A549 (cell line): ENCODE measurements at regions of chr7 and their contacts with region 1.

Region 1: GRCh38 chr7:73623798-73624668 is at the start of gene MLXIPL:
- DNase-seq: peak; percentile 78 to 97
- ATAC-seq: peak; percentile 84 to 90
- H3K4me3 ChIP-seq: peak within 1 kb of the TSS; percentile 55
- H3K27ac ChIP-seq: peak within 1 kb of the TSS; percentile 71 to 92
- H3K4me1 ChIP-seq: peaks cover 25% of the 10 kb centered on the region
- CTCF ChIP-seq: no peak
- EP300 ChIP-seq: no peak
- POLR2A ChIP-seq: peak; percentile 48; the same call in 1 of the 2 replicates
- RAD21 ChIP-seq: no peak
- polyA plus RNA-seq, gene MLXIPL: 1.4 and 2.2 TPM in 2 replicates

Region 2: DNA sequence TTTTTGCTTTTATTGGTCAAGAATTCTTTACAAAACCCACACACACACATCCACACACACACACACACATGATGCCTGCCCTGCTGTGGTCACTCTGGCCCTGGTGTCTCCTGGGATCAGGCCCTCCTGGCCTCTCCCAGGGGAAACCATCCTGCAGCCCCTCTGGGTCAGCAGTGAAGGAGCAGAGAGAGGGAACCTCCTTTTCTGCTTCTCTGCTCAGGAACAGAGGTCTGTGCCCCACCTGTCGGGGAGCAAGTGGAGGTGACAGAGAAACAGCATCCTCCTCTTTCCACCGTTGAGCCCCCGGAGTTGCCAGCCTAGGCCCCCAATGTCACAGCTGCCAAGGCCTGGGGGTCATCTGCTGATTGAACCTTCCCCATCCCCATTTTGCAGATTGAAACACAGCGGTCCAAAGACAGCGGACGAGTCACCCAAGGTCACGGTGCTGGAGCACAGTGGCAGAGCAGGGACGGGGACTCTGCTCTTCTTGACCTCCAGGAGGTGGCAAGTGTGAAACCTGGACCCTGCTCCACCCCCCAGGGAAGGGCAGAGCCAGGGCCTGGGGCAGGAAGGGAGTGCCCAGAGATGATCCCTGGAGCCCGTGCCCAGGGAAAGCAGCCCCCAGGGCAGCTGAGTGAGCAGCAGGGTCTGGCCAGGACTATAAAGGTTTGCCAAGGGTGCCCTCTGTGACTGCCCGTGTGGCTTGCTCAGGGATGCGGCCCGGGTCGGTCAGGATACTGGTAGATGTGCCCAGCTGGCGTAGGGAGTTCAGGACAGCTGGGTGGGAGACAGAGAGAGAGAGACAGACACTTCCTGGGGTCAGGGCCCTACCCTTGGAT is 30.6 kb before region 1 on chr7:
- CTCF ChIA-PET with region 1: no interaction called
- POLR2A ChIA-PET with region 1: no interaction called
- DNase-seq: no peak
- ATAC-seq: peak in 1 of 2 experiments; percentile 24; a peak in 2 of 6 replicates
- H3K4me3 ChIP-seq: no peak overlapping the region
- H3K27ac ChIP-seq: no peak overlapping the region
- H3K4me1 ChIP-seq: no peaks in the 10 kb centered on the region
- CTCF ChIP-seq: no peak
- EP300 ChIP-seq: no peak
- POLR2A ChIP-seq: no peak
- RAD21 ChIP-seq: no peak

Region 3: GRCh38 chr7:73638911-73639310 is 14.9 kb after region 1 on chr7:
- CTCF ChIA-PET with region 1: interaction called, 50 read pairs
- POLR2A ChIA-PET with region 1: interaction called, 7 read pairs
- DNase-seq: no peak
- ATAC-seq: no peak
- H3K4me3 ChIP-seq: no peak overlapping the region
- H3K27ac ChIP-seq: no peak overlapping the region
- H3K4me1 ChIP-seq: peaks cover 21% of the 10 kb centered on the region
- CTCF ChIP-seq: no peak
- EP300 ChIP-seq: no peak
- POLR2A ChIP-seq: no peak
- RAD21 ChIP-seq: no peak

Region 4: GRCh38 chr7:73647725-73648592 is 23.9 kb after region 1 on chr7:
- CTCF ChIA-PET with region 1: interaction called, 50 read pairs
- POLR2A ChIA-PET with region 1: no interaction called
- DNase-seq: peak in 1 of 2 experiments; percentile 43
- ATAC-seq: peak; percentile 81 to 84
- H3K4me3 ChIP-seq: peak overlapping the region; percentile 68
- H3K27ac ChIP-seq: peak overlapping the region; percentile 91 to 95
- H3K4me1 ChIP-seq: peaks cover 13% of the 10 kb centered on the region; the same call in 2 of the 3 replicates
- CTCF ChIP-seq: peak; percentile 50
- EP300 ChIP-seq: no peak
- POLR2A ChIP-seq: no peak
- RAD21 ChIP-seq: peak in 1 of 2 experiments; percentile 49; a peak in 1 of 5 replicates